AG04450 (cell line): ENCODE measurements at regions of chr17 and their contacts with region 1.

Region 1: DNA sequence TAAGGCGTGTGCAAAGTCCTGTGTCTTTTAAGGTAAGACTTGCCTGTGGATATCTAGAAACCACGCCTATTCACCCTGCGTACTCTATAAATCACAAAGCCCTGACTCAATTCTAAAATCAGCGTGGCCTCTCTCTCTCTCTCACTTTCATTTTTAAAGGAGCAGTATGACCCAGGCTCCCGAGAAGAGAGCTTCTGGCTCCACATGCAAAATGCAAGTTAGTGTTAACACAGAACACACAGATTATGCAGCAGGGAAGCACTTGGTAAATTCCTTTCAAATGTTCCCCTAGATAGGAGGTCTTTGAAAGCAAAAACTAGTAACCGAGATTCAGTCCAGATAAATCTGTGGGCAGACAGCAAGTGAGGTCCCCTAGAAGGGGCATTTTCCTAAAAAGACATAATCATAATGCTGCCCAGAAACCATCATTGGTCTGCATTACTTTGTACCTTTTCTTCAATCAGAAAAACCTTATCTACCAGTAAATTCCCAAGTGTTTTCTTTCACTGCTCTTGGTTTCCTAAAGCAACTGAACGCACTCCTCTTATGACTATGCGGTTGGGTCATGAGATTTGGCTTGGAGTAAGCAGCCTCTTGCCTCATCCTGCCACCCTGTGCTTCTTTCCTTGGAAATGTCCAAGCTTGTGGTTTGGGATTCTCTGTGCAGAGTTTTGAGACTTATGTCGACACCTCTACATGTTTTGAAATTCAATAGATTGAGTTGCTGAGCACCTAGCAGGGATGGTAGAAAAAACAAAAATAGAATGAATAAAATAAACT is 31.7 kb upstream of the KCNJ2 start:
- DNase-seq: peak; percentile 93
- H3K4me3 ChIP-seq: peak overlapping the region; percentile 37
- H3K27ac ChIP-seq: peak overlapping the region; percentile 91
- H3K27me3 ChIP-seq: no peaks in the 10 kb centered on the region
- CTCF ChIP-seq: no peak

Region 2: GRCh38 chr17:69539781-69540319 is 597.8 kb before region 1 on chr17:
- CTCF ChIA-PET with region 1: no interaction called
- POLR2A ChIA-PET with region 1: interaction called, 11 read pairs
- DNase-seq: peak; percentile 86
- H3K4me3 ChIP-seq: peak overlapping the region; percentile 35
- H3K27ac ChIP-seq: peak overlapping the region; percentile 98
- H3K27me3 ChIP-seq: no peaks in the 10 kb centered on the region
- CTCF ChIP-seq: no peak